ENCODE measurements at regions of chr9 and their contacts with region 1.

Region 1: GRCh38 chr9:22244141-22245011 is 202.2 kb upstream of the DMRTA1 start:
- DNase-seq: peak; percentile 63
- H3K4me3 Mint-ChIP-seq: no peak overlapping the region
- H3K27ac Mint-ChIP-seq: no peak overlapping the region
- H3K4me1 Mint-ChIP-seq: peaks cover 53% of the 10 kb centered on the region
- H3K27me3 Mint-ChIP-seq: no peaks in the 10 kb centered on the region
- CTCF ChIP-seq: peak; percentile 40

Region 2: GRCh38 chr9:21828853-21829410 is 415.4 kb before region 1 on chr9:
- CTCF ChIA-PET with region 1: no interaction called
- intact Hi-C with region 1: loop called (anchors 5 kb)
- DNase-seq: peak; percentile 43
- H3K4me3 Mint-ChIP-seq: peak overlapping the region; percentile 10
- H3K27ac Mint-ChIP-seq: peak overlapping the region; percentile 51
- H3K4me1 Mint-ChIP-seq: peaks cover 56% of the 10 kb centered on the region
- H3K27me3 Mint-ChIP-seq: no peaks in the 10 kb centered on the region
- CTCF ChIP-seq: no peak

Region 3: GRCh38 chr9:21862871-21863270 is 381.5 kb before region 1 on chr9:
- CTCF ChIA-PET with region 1: no interaction called
- intact Hi-C with region 1: no loop called
- DNase-seq: no peak
- H3K4me3 Mint-ChIP-seq: no peak overlapping the region
- H3K27ac Mint-ChIP-seq: no peak overlapping the region
- H3K4me1 Mint-ChIP-seq: no peaks in the 10 kb centered on the region
- H3K27me3 Mint-ChIP-seq: no peaks in the 10 kb centered on the region
- CTCF ChIP-seq: no peak

Region 4: DNA sequence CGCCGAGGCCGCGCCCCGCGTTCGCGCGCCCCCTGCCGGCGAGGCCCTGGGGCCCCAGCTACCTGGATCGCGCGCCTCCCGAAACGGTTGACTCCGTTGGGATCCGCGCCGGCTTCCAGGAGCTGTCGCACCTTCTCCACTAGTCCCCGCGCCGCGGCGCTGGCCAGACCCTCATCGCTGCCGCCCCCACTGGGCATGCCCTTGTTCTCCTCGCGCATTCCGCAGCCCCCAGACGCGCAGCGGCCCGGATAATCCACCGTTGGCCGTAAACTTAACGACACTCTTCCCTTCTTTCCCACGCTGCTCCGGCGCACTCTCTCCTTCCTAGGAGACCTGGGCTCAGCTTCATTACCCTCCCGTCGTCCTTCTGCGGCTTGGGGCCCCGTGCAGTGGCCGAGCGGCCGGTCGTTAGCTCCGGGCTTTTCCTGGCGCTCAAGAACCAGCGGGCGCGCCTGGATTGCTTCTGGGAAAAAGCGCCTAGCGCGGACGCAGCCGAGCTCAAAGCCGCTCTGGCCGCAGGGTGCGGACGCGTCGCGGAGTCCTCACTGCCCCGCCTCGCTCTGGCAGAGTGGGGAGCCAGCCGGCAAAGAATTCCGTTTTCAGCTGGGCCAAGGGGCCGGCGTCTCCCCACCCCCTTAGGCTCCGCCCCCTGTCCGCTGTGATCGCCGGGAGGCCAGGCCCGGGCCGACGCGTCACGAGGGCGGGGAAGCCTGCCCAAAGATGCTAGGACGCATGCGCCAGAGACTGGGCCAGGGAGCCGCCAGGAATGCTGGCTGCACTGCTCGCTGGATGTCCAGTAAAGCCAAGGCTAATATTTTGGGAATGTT is 235.4 kb before region 1 on chr9 and contains the start of gene CDKN2B:
- CTCF ChIA-PET with region 1: interaction called, 18 read pairs
- intact Hi-C with region 1: loop called (anchors 5 kb)
- DNase-seq: peak; percentile 96
- H3K4me3 Mint-ChIP-seq: peak within 1 kb of the TSS; percentile 96
- H3K27ac Mint-ChIP-seq: peak within 1 kb of the TSS; percentile 53
- H3K4me1 Mint-ChIP-seq: peaks cover 16% of the 10 kb centered on the region
- H3K27me3 Mint-ChIP-seq: no peaks in the 10 kb centered on the region
- CTCF ChIP-seq: peak; percentile 91
- total RNA-seq, gene CDKN2B: 30.4 and 35.2 TPM in 2 replicates

Region 5: GRCh38 chr9:22105005-22105722 is 139.2 kb before region 1 on chr9:
- CTCF ChIA-PET with region 1: interaction called, 4 read pairs
- intact Hi-C with region 1: loop called (anchors 5 kb)
- DNase-seq: no peak
- H3K4me3 Mint-ChIP-seq: no peak overlapping the region
- H3K27ac Mint-ChIP-seq: peak overlapping the region; percentile 86
- H3K4me1 Mint-ChIP-seq: peaks cover 69% of the 10 kb centered on the region
- H3K27me3 Mint-ChIP-seq: no peaks in the 10 kb centered on the region
- CTCF ChIP-seq: no peak

Region 6: DNA sequence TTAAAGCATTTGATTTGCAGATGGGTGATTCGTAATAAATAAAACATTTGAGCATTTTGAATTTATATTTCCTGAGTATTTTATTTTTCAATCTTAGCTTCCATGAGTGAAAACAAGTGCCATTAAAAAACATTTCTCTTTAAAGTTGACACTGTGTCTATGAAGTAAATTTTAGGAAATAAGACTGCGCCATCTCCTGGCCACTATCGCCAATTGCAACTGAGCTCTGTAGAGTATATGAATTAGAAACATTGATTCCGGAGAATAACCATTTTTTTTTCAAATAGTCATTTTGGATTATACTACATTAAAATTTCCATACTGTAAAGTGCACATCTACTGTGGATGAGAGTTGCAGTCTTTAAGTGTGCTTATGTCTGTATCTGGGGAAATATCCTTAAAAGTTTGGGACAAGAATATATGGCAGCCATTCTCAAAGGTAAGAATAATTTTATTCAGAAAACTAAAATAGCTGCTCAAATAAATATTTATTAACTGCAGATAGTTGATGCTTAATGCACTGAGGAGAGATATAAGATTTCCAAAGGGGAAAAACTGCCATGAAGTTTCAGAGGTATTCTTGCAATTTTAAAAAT is 208.1 kb after region 1 on chr9:
- CTCF ChIA-PET with region 1: interaction called, 4 read pairs
- intact Hi-C with region 1: loop called (anchors 1 kb)
- DNase-seq: peak; percentile 36
- H3K4me3 Mint-ChIP-seq: no peak overlapping the region
- H3K27ac Mint-ChIP-seq: no peak overlapping the region
- H3K4me1 Mint-ChIP-seq: peaks cover 7% of the 10 kb centered on the region
- H3K27me3 Mint-ChIP-seq: no peaks in the 10 kb centered on the region
- CTCF ChIP-seq: peak; percentile 57

Region 7: GRCh38 chr9:22790329-22790728 is 546.0 kb after region 1 on chr9:
- CTCF ChIA-PET with region 1: no interaction called
- intact Hi-C with region 1: no loop called
- DNase-seq: no peak
- H3K4me3 Mint-ChIP-seq: no peak overlapping the region
- H3K27ac Mint-ChIP-seq: no peak overlapping the region
- H3K4me1 Mint-ChIP-seq: no peaks in the 10 kb centered on the region
- H3K27me3 Mint-ChIP-seq: peaks cover 9% of the 10 kb centered on the region
- CTCF ChIP-seq: no peak